GM10248 (cell line): ENCODE measurements at regions of chr17 and their contacts with region 1.

Region 1: GRCh38 chr17:58369214-58370031 is 17.4 kb upstream of the SUPT4H1 start:
- DNase-seq: peak; percentile 48
- CTCF ChIP-seq: no peak

Region 2: GRCh38 chr17:58136669-58137283 is 232.6 kb before region 1 on chr17:
- CTCF ChIA-PET with region 1: no interaction called
- POLR2A ChIA-PET with region 1: no interaction called
- DNase-seq: no peak
- CTCF ChIP-seq: no peak

Region 3: DNA sequence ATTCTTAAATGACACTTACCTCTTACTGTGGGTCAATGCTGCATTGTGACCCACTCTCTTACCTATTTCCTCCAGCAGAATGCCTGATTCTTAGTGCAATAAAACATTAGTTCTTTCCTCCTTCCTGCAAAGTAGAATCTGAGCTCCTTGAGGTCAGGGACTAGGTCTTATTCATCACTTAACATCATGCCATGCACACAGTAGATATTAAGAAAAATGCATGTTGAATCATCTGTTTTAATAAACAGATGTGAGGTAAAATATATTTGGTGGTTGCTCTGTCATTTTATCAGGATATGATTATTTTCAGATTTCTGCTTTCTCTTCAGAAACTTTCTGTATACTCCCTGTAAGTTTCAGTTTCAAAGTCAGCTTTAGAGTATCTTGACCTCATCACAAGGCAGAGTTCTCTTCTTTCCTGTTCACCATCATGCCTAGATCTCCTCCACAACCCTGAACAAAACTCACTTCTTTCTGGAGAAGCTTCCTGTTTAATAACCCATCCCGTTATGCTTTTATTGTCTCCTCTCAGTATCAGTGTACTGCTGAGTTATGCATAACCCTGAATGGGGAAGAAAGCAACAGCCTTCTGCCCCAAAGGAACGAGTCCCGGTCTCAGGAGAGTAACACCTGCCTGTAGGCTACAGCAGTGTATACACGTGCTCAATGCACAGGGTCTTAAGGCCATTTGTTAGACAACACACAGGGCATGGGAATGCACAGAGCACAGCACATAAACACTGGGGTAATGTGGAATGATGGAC is 12.9 kb after region 1 on chr17:
- CTCF ChIA-PET with region 1: interaction called, 27 read pairs
- POLR2A ChIA-PET with region 1: interaction called, 5 read pairs
- DNase-seq: no peak
- CTCF ChIP-seq: no peak

Region 4: DNA sequence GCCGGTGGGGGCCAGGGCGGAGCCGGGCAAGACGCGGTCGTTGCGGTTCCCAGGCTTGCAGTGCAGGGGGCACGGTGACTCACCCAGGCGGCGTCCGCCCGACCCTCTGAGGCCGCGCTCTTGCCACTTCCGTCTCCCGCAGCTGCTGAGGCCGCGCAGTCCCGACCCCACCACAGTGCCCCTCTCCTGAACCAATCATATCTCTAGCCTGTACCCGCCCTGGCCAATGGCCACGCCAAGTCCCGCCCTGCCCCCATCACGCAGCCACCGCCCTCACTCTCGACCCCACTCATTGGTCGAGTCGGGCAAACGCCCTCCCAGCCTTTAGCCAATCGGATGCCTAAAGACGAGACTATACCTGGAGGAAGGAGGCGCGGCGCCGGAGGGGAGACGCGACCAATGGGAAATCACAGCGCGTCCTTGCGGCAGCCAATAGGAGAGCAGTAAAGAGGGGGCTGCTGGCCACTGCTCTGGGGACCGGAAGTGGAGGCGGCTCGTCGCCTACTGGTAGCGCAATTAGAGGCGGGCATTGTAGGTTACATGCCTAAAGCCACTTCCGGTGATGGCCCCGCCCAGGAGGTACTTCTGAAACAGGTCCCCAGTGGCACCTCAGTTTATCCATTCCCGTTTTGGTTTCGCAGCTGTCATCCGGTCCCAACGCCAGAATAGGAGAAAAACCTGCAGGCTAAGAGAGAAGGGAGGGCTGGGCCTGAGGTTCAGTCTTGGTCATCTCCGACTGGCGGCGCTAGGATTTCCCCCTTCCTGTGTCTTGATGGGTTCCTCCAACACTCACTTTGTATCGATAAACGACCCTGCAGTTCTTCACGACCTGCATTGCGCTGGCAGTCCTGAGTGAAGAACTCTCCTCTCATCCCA is 148.5 kb after region 1 on chr17:
- CTCF ChIA-PET with region 1: no interaction called
- POLR2A ChIA-PET with region 1: no interaction called
- DNase-seq: peak; percentile 96
- CTCF ChIP-seq: no peak

Region 5: DNA sequence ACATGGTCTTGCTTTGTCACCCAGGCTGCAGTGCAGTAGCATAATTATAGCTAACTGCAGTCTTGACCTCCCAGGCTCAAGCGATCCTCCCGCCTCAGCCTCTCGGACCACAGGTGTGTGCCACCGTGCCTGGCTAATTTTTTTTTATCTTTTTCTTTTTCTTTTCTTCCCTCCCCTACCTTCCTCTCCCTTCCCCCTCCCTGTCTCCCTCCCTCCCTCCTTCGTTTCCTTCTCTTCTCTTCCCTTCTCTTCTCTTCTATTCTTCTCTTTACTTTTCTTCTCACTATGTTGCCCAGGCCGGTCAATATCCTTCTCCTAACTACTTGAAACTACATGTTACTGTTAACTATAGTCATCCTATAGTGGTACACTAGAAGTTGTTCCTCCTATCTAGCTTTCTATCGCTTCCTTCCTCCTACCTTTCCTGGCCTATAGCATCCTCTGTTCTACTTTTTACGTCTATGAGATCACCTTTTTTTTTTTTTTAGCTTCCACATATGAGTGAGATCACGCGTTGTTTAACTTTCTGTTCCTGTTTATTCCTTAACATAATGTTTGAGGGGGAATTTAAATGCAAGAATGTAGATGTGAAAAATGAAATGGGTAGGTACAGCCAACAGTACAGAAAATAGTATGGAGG is 931.4 kb after region 1 on chr17:
- CTCF ChIA-PET with region 1: no interaction called
- POLR2A ChIA-PET with region 1: no interaction called
- DNase-seq: no peak
- CTCF ChIP-seq: no peak